ENCODE measurements at regions of chr5 and their contacts with region 1.

Region 1: GRCh38 chr5:1360861-1361260 is 16.0 kb upstream of the CLPTM1L start:
- DNase-seq: no peak
- H3K4me3 ChIP-seq: no peak overlapping the region
- H3K4me3 Mint-ChIP-seq: no peak overlapping the region
- H3K27ac ChIP-seq: no peak overlapping the region
- H3K27ac Mint-ChIP-seq: peak overlapping the region in 1 of 7 donors; percentile 32
- H3K4me1 ChIP-seq: no peaks in the 10 kb centered on the region
- H3K4me1 Mint-ChIP-seq: no peaks in the 10 kb centered on the region
- H3K27me3 ChIP-seq: no peaks in the 10 kb centered on the region
- H3K27me3 Mint-ChIP-seq: peaks cover 21 to 38% (median 25%) of the 10 kb centered on the region in 3 donors
- CTCF ChIP-seq: no peak

Region 2: DNA sequence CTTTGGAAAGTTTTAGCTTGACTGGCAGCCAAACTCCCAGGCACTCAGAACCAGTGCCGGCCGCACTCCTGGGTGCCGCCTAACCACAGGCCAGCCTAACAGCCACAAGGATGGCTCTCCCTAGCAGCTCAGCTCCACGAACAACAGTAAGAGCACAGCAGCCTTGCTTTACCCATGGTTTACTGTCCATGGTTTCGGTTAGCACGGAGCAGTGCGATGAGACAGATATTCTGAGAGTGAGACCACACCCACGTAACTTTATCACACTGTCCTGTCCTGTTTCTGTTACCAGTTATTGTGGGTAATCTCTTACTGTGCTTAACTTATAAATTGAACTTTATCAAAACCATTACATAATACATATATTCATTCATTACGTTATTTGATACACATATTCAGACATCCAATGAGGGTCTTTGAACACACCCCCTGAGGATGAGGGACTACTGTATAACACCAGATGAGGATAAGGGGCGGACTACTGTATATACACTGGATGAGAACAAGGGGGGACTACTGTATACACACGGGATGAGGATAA is 28.3 kb before region 1 on chr5:
- intact Hi-C with region 1: loop called in 1 of 2 experiments (anchors 1 kb)
- DNase-seq: no peak
- H3K4me3 ChIP-seq: no peak overlapping the region
- H3K4me3 Mint-ChIP-seq: no peak overlapping the region
- H3K27ac ChIP-seq: no peak overlapping the region
- H3K27ac Mint-ChIP-seq: peak overlapping the region in 3 of 7 donors; percentile 20 to 57 (median 56)
- H3K4me1 ChIP-seq: no peaks in the 10 kb centered on the region
- H3K4me1 Mint-ChIP-seq: no peaks in the 10 kb centered on the region
- H3K27me3 ChIP-seq: no peaks in the 10 kb centered on the region
- H3K27me3 Mint-ChIP-seq: peaks cover 0 to 3% (median 0%) of the 10 kb centered on the region in 3 donors
- CTCF ChIP-seq: no peak

Region 3: GRCh38 chr5:1401536-1402138 is 40.8 kb after region 1 on chr5:
- intact Hi-C with region 1: no loop called
- DNase-seq: no peak
- H3K4me3 ChIP-seq: no peak overlapping the region
- H3K4me3 Mint-ChIP-seq: no peak overlapping the region
- H3K27ac ChIP-seq: no peak overlapping the region
- H3K27ac Mint-ChIP-seq: no peak overlapping the region
- H3K4me1 ChIP-seq: no peaks in the 10 kb centered on the region
- H3K4me1 Mint-ChIP-seq: no peaks in the 10 kb centered on the region
- H3K27me3 ChIP-seq: no peaks in the 10 kb centered on the region
- H3K27me3 Mint-ChIP-seq: peaks cover 17 to 22% (median 20%) of the 10 kb centered on the region in 3 donors
- CTCF ChIP-seq: no peak

Region 4: DNA sequence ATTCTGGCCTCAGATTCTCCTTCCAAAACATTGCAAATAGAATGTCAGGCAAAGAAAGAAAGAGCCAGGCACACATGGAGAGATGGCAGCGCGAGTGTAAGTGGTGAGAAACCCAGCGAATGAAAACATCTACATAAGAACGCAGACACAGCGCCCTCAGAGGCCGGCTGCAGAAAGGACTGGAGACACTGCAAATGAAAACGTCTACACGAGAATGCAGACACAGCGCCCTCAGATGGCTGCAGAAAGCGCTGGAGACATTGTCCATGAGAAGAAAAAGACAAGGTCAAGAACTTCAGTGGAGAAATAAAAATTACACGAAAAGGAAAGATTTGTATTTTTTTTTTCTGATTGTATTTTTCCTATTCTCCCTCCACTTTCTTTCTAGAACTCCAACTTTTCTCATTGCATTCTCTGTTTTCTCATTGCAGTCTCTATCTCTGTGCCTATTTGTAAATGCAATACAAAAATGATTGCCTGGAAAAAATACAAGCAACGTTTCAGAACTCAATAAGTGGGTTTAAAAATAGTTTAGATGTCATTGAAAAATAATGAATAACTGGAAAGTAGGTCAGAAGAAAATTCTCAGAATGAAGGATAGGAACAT is 280.8 kb after region 1 on chr5:
- intact Hi-C with region 1: no loop called
- DNase-seq: peak; percentile 68 to 72 (median 69)
- H3K4me3 ChIP-seq: no peak overlapping the region
- H3K4me3 Mint-ChIP-seq: peak overlapping the region in 1 of 2 donors; percentile 14
- H3K27ac ChIP-seq: no peak overlapping the region
- H3K27ac Mint-ChIP-seq: no peak overlapping the region
- H3K4me1 ChIP-seq: peaks cover 3 to 4% of the 10 kb centered on the region in 2 donors
- H3K4me1 Mint-ChIP-seq: peaks cover 9% of the 10 kb centered on the region
- H3K27me3 ChIP-seq: peaks cover 10 to 34% of the 10 kb centered on the region in 2 donors
- H3K27me3 Mint-ChIP-seq: peaks cover 33 to 56% (median 39%) of the 10 kb centered on the region in 3 donors
- CTCF ChIP-seq: peak; percentile 92

Measured in CD14-positive monocyte (primary cell).